ENCODE measurements at regions of chr10 and their contacts with region 1.

Region 1: DNA sequence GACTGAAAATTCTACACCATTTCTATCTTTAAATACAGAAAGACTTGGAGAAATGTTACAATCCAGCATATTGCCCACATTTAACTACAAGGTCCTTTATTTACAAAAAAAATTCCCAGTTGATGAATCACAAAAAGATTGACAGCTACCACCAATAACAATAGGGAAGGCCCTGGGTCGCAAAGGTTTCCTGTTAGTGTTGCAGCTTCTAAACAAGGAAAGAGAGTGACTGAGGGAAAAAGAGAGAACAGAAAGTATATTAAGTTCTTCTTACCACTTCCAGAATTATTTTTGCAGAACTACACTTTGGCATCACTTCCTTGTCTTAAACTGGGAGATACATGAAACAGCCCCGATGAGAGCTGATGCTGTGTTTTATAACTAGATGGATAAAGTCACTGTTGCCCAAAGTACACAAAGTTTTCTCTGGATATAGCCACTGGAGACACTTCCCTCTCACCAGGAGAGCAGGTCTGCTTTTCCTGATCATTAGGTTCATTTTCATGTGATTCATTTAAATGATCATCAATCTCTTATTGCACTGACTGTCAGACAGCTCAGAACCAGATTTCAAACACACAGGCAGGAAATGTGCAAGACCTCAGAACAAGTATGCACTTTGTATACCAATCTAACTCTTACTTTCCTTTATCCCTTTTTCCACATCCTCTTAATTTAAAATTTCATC is 57.0 kb downstream of the SHTN1 start:
- DNase-seq: peak in 1 of 4 experiments; percentile 4
- ATAC-seq: no peak; the same call in 1 of the 3 replicates
- H3K4me3 ChIP-seq: no peak overlapping the region
- H3K27ac ChIP-seq: peak overlapping the region; percentile 69; the same call in 1 of the 3 replicates
- H3K4me1 ChIP-seq: peaks cover 0 to 9% of the 10 kb centered on the region in 2 experiments; a peak in 3 of 5 replicates
- H3K27me3 ChIP-seq: no peaks in the 10 kb centered on the region
- CTCF ChIP-seq: no peak
- EP300 ChIP-seq: no peak
- POLR2A ChIP-seq: no peak
- RAD21 ChIP-seq: no peak

Region 2: GRCh38 chr10:117004227-117005026 is 56.4 kb after region 1 on chr10:
- CTCF ChIA-PET with region 1: no interaction called
- POLR2A ChIA-PET with region 1: interaction called, 3 read pairs
- in situ Hi-C with region 1: no loop called
- intact Hi-C with region 1: loop called (anchors 5 kb)
- DNase-seq: peak; percentile 44 to 61 (median 50)
- ATAC-seq: peak; percentile 77
- H3K4me3 ChIP-seq: peak overlapping the region; percentile 81
- H3K27ac ChIP-seq: peak overlapping the region; percentile 99
- H3K4me1 ChIP-seq: peaks cover 13% of the 10 kb centered on the region in 2 experiments; a peak in 4 of 5 replicates
- H3K27me3 ChIP-seq: no peaks in the 10 kb centered on the region
- CTCF ChIP-seq: peak in 1 of 3 experiments; percentile 10; a peak in 1 of 6 replicates
- EP300 ChIP-seq: no peak
- POLR2A ChIP-seq: no peak
- RAD21 ChIP-seq: no peak